A549 (cell line): ENCODE measurements at regions of chr12 and their contacts with region 1.

Region 1: DNA sequence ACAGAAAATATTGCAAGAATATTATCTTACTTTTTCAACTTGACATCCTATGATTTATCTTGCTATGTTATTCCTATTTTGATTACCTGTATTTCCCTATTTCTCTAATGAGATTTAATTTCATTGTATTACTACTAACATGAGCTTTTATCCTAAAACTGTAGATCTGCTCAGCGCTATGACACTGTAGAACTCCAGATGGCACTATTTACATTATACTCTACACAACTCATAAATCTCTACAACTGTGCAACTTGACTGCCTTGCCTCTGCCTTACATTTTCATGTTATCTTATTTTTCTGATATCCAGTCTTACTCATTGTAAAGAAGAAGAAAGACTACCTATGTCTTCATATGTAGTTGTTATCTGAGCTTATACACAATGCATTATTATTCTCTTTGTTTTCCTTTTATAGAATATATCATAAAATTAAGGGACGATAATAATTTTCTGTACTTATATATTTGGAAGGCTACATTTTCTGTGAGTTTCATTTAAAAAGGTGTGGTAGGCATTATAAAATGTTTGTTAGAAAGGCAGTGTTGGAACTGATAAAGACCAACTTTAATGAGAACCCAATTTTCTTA is 24.1 kb downstream of the NUP37 start:
- DNase-seq: peak; percentile 6 to 31
- ATAC-seq: peak; percentile 82 to 87
- H3K4me3 ChIP-seq: no peak overlapping the region
- H3K27ac ChIP-seq: no peak overlapping the region
- H3K4me1 ChIP-seq: no peaks in the 10 kb centered on the region
- CTCF ChIP-seq: peak; percentile 65
- EP300 ChIP-seq: no peak
- POLR2A ChIP-seq: no peak
- RAD21 ChIP-seq: peak; percentile 65 to 68

Region 2: GRCh38 chr12:101935897-101936746 is 159.6 kb before region 1 on chr12:
- CTCF ChIA-PET with region 1: no interaction called
- POLR2A ChIA-PET with region 1: no interaction called
- DNase-seq: no peak
- ATAC-seq: no peak
- H3K4me3 ChIP-seq: no peak overlapping the region
- H3K27ac ChIP-seq: no peak overlapping the region
- H3K4me1 ChIP-seq: no peaks in the 10 kb centered on the region
- CTCF ChIP-seq: no peak
- EP300 ChIP-seq: no peak
- POLR2A ChIP-seq: no peak
- RAD21 ChIP-seq: no peak

Region 3: DNA sequence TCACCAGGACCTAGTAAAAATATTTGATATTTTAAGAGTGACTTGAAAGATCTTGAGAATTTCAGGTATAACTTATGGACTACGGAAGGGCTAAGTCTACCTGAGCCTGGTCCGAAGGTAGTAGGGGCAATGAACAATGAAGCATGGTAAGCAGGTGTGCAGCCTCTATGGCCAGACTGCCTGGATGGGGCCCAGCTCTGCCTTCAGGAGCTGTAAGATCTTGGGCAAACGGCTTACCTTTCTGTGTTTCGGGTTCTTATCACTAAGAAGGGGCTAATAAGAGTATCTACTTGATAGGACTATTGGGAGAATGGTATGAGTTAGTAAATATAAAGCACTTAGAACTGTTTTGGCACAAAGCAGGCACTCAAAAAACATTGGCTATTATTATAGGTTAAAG is 14.9 kb before region 1 on chr12:
- CTCF ChIA-PET with region 1: interaction called, 13 read pairs
- POLR2A ChIA-PET with region 1: no interaction called
- DNase-seq: no peak
- ATAC-seq: no peak
- H3K4me3 ChIP-seq: no peak overlapping the region
- H3K27ac ChIP-seq: no peak overlapping the region
- H3K4me1 ChIP-seq: no peaks in the 10 kb centered on the region
- CTCF ChIP-seq: no peak
- EP300 ChIP-seq: no peak
- POLR2A ChIP-seq: no peak
- RAD21 ChIP-seq: no peak

Region 4: GRCh38 chr12:102740141-102740955 is 644.6 kb after region 1 on chr12:
- CTCF ChIA-PET with region 1: interaction called, 12 read pairs
- POLR2A ChIA-PET with region 1: no interaction called
- DNase-seq: peak; percentile 12 to 58
- ATAC-seq: peak; percentile 81 to 87; a peak in 5 of 6 replicates
- H3K4me3 ChIP-seq: no peak overlapping the region
- H3K27ac ChIP-seq: peak overlapping the region in 1 of 2 experiments; percentile 46; a peak in 2 of 6 replicates
- H3K4me1 ChIP-seq: no peaks in the 10 kb centered on the region
- CTCF ChIP-seq: peak; percentile 69
- EP300 ChIP-seq: no peak
- POLR2A ChIP-seq: no peak
- RAD21 ChIP-seq: peak; percentile 81 to 88

Region 5: DNA sequence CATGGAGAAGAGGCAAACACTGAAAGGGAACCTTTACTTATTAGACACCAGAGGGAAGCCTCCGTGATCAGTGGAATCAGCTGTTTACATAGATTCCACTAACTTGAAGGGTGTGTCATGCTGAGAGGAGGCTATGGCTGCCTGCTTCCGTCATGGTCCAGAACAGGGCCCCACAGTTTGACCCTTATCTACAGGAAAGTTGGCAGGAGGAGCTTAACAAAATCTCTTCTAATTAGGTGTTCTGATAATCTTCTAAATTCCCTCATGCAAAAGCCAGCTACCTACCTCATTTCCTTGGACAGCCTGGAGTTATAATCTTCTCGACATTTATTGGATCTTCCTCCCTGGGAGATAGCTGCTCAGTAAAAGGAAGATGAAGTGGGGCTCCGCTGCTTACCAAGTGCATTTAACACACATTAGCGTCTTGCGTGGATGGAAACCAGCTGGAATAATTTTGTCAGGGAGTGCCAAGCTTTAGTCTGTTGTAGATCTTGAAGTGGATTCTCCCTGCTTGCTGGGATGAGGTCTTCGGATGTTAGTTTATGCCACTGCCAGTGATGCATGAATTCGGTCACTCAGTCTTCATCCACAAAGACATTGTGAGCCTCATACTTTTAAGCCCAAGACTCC is 650.3 kb after region 1 on chr12:
- CTCF ChIA-PET with region 1: interaction called, 12 read pairs
- POLR2A ChIA-PET with region 1: no interaction called
- DNase-seq: no peak
- ATAC-seq: no peak
- H3K4me3 ChIP-seq: no peak overlapping the region
- H3K27ac ChIP-seq: no peak overlapping the region
- H3K4me1 ChIP-seq: no peaks in the 10 kb centered on the region
- CTCF ChIP-seq: no peak
- EP300 ChIP-seq: no peak
- POLR2A ChIP-seq: no peak
- RAD21 ChIP-seq: no peak

Region 6: GRCh38 chr12:102811110-102811737 is 715.5 kb after region 1 on chr12:
- CTCF ChIA-PET with region 1: interaction called, 11 read pairs
- POLR2A ChIA-PET with region 1: no interaction called
- DNase-seq: peak; percentile 38 to 51
- ATAC-seq: peak; percentile 58 to 87; a peak in 4 of 6 replicates
- H3K4me3 ChIP-seq: no peak overlapping the region
- H3K27ac ChIP-seq: no peak overlapping the region
- H3K4me1 ChIP-seq: no peaks in the 10 kb centered on the region
- CTCF ChIP-seq: peak; percentile 75
- EP300 ChIP-seq: no peak
- POLR2A ChIP-seq: no peak
- RAD21 ChIP-seq: peak; percentile 76 to 82